Cardiac septum (tissue), 1 donor: ENCODE measurements at regions of chr6 and their contacts with region 1.

Region 1: GRCh38 chr6:71288228-71289001 is at the start of gene OGFRL1:
- DNase-seq: peak; percentile 91
- total RNA-seq, gene OGFRL1: 7.7 TPM

Region 2: GRCh38 chr6:70351461-70351860 is 937.0 kb before region 1 on chr6:
- intact Hi-C with region 1: no loop called
- DNase-seq: no peak

Region 3: DNA sequence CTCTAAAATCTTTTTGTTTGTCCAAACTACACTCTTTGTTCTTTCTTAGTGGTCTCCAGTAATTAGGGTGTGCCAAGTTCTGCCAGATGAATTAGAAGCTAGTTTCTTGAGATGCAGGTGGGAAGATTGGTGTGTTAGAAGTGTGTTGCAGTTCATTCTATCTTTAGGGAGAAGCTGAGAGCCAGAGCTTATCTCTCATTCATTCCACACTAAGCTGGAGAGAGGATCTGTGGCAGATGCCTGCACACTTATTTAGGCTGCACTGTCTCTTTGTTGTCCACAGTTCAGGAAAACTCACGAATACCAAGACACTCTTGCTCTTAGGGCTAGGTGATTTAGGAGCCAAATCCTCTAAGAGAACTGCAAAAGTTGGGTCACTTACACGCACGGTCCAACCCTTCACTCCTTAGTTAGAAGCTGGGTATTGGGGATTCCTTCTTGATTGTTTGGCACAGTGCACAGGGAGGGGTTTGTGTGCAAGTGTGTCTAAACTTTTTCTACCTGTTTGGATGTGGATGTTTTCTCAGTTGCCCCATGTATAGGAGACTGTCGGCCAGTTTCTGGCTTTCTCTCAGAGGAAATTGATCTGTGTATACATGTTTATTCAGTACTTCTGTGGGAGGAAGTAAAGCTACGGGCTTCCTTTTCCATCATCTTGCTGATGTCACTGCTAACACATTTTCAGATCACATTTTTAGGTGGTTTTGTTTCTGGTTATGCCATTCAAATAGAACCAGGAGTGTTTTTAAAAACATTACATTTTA is 571.2 kb before region 1 on chr6:
- intact Hi-C with region 1: no loop called
- DNase-seq: no peak

Region 4: DNA sequence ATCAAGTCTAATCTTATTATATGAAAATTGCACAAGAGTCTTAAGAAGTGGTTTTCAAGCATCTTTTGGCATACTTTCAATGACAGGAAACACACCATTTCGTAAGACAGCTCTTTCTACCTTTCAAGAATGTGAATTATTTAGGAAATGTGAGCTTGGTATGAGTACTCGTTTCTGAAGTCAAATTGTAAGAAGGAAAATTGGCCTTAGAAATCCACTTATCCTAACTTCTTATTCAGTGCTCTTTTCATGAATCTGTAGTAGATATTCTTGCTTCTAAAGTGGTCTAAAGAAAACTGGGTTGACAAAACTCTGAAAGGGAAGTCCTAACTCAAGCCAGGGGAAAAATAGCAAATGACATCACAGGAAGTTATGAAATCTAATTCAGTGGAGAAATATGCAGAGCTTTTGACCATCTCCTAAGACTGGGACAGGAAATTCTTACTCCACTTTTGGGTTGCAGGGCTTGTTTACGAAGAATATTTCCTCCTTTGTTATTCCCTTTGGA is 38.3 kb before region 1 on chr6:
- intact Hi-C with region 1: loop called (anchors 2 kb)
- DNase-seq: no peak

Region 5: DNA sequence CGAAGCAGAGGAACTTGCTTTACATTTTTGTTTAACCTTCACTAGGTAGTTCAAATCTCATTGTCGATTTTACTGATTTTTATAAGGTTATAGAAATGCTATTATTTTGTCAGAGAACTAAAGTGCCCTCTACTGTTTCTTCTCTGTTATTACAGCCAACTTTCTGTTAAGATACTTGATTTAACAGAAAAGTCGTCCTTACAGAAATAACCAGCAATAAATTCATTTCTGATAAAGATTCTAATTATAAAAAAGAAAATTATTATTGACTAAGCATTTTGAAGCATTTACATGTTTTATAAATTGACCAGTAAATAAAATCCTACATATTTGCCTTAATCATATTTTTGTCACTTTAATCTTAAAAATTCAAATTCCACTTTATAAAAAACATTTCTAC is 61.0 kb after region 1 on chr6:
- intact Hi-C with region 1: loop called (anchors 5 kb)
- DNase-seq: no peak